Stomach (tissue), 19 donors: ENCODE measurements at regions of chr16 and their contacts with region 1.

Region 1: DNA sequence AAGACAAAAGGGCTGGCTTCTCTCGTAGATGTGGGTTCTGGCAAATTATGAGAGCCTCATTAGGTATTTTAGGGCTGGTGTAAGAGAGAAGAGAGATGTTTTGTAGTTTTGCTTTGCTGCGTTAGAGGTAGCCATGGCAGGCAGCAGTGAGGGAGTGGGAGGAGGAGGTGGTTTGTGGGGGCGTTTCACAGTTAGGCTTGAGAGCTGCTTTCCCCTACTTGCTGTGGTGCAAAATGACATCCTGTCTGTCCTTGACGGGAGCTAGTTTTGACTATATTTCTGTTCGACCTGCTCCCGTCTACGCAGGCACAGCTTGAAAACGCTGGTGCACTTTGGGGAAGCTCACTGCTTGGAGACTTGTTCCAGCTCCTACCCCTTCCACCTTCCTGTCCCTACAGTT is 75.5 kb downstream of the SLC5A11 start:
- DNase-seq: no peak
- H3K4me3 ChIP-seq: no peak overlapping the region
- H3K27ac ChIP-seq: no peak overlapping the region
- H3K4me1 ChIP-seq: no peaks in the 10 kb centered on the region
- H3K27me3 ChIP-seq: no peaks in the 10 kb centered on the region
- CTCF ChIP-seq: no peak
- EP300 ChIP-seq: no peak
- POLR2A ChIP-seq: no peak

Region 2: DNA sequence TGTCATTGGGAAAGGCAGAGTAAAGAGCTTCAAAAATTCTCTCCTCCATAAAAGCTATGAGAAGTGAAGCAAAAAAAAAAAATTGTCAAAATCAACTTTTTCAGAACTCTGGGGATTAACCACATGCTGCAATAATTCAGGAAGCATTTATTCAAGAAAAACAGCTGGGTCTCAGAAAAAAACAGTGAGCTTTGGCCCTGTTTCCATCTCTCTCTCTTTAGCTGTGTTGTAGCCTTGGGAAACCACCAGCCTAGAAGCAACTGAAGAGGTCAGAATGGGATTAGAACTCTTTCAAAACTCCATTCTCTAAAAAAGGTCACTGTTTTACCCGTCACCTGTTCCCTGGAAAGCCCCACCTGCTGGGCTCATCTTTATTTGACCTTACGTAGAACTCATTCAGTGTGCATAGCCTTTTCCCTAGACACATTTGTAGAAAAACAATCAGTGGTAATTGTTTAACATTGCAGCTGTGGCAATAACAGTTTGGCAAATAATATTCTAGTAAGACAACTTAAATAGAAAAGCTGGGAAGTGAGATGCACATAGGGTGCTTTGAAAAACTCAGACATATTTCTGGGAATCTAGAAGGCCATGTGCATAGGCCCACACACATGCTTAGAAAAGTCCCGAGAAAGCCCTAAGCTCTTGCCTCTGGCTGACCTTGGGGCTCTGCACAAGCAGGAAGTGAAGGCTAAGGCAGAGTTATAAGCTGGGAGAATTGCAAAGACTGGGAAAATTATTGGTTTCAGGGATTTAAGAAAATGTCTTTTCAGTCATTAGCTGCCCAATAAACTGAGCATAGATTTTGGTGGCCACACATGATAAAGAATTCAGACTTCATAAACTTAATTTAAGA is 57.4 kb before region 1 on chr16:
- intact Hi-C with region 1: loop called (anchors 10 kb)
- DNase-seq: no peak
- H3K4me3 ChIP-seq: no peak overlapping the region
- H3K27ac ChIP-seq: no peak overlapping the region
- H3K4me1 ChIP-seq: no peaks in the 10 kb centered on the region
- H3K27me3 ChIP-seq: no peaks in the 10 kb centered on the region
- CTCF ChIP-seq: no peak
- EP300 ChIP-seq: no peak
- POLR2A ChIP-seq: no peak